Activated CD4-positive, alpha-beta T cell treated with anti-CD3 and anti-CD28 coated beads, Interleukin-2, amount 10 ng/mL, durations not matched to agents 24 days and 14 days (primary cell): ENCODE measurements at regions of chr5 and their contacts with region 1.

Region 1: DNA sequence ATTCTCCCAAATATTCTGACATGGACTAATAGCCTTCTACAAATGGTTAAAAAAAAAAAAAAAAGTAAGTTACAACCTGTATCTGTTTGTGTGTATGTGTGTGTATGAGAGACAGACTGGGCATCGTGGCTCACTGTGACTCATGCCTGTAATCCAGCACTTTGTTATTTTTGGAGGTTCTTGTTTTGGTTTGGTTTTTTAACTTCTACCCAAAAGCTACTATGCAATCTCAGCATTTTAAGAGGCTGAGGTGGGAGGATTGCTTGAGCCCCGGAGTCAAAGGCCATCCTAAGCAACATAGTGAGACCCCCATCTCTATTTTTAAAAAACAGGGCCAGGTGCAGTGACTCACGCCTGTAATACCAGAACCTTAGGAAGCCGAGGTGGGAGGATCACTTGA is 17.6 kb upstream of the HAVCR1 start:
- DNase-seq: peak; percentile 62
- H3K4me3 Mint-ChIP-seq: no peak overlapping the region
- H3K27ac Mint-ChIP-seq: peak overlapping the region; percentile 59
- H3K4me1 Mint-ChIP-seq: peaks cover 45% of the 10 kb centered on the region
- H3K27me3 Mint-ChIP-seq: no peaks in the 10 kb centered on the region

Region 2: DNA sequence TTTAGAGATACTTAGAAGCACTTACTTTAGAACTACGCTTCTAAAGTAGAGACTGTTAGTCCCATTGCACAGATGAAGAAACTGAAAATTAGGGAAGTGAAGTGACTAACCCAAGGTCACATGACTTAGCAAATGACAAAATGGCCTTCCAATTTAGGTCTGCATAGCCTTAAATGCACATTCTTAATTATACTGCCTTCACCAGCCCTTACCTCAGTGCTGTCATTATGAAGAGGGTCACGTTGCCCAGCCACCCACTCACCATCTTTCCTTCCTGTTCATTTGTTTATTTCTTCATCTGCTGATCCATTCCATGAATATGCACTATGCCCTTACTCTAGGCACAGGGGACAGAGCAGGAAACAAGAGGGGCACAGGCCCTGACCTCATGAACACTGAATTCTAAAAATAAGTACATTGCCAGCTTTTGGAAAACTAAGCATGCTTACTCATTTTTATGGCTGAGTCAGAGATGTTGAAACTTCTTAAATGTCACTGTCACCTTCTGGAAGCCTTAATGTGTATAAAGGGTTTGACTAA is 23.7 kb after region 1 on chr5:
- intact Hi-C with region 1: loop called (anchors 1 kb)
- DNase-seq: peak; percentile 61
- H3K4me3 Mint-ChIP-seq: peak overlapping the region; percentile 42
- H3K27ac Mint-ChIP-seq: peak overlapping the region; percentile 93
- H3K4me1 Mint-ChIP-seq: peaks cover 41% of the 10 kb centered on the region
- H3K27me3 Mint-ChIP-seq: no peaks in the 10 kb centered on the region

Region 3: GRCh38 chr5:157116483-157116954 is 40.0 kb after region 1 on chr5:
- intact Hi-C with region 1: loop called (anchors 1 kb)
- DNase-seq: peak; percentile 68
- H3K4me3 Mint-ChIP-seq: peak overlapping the region; percentile 26
- H3K27ac Mint-ChIP-seq: peak overlapping the region; percentile 70
- H3K4me1 Mint-ChIP-seq: peaks cover 33% of the 10 kb centered on the region
- H3K27me3 Mint-ChIP-seq: no peaks in the 10 kb centered on the region